Left cardiac atrium (tissue), 4 donors: ENCODE measurements at regions of chr3 and their contacts with region 1.

Region 1: DNA sequence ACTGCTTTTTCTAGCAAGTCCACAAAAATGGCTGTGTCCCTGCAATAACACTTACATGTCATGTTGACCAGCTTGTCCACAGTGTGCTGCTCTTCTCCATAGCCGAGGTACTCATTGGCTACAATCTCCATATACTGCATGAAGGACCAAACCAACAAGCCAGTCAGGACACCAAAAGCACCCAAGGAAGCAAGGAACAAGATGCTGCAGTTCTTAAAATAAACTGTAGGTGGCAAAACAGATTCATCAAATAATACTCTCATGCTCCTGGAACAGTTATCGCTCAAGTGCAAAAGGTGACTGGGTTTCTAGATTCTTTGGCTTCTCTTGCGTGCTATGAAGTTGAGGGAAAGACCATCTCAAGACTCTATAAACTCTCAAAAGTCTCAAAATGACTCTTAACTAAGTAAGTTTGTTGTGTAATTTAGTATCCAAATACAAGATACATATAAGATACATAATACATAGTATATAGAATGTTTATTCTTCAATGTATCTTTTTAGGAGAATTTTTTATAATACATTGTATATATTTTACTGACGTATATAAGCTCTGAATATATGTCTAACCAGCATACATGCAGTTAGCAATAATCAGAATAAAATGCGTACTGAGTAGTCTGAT is 57.0 kb downstream of the NEK10 start:
- DNase-seq: no peak
- ATAC-seq: peak; percentile 64 to 78

Region 2: DNA sequence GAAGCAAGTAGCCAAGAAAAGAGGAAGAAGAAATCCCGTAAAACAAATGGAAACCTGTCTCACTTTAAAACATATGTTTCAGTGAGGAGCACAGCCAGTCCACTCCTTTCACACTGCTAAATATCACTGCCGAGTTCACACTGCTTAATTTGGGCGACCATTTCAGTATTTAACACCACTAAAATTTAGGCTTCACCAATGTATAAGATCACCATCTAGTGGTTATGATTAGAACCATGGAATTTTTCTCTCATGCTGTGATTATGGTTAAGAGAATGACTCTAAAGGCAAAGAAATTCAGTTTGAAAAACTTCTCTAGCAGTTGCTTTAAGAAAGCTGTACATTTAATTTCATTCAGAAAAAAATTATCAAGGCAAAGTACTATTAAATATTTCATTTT is 155.4 kb after region 1 on chr3:
- intact Hi-C with region 1: loop called in 1 of 2 experiments (anchors 2 kb)
- DNase-seq: no peak
- ATAC-seq: peak; percentile 68 to 88

Region 3: DNA sequence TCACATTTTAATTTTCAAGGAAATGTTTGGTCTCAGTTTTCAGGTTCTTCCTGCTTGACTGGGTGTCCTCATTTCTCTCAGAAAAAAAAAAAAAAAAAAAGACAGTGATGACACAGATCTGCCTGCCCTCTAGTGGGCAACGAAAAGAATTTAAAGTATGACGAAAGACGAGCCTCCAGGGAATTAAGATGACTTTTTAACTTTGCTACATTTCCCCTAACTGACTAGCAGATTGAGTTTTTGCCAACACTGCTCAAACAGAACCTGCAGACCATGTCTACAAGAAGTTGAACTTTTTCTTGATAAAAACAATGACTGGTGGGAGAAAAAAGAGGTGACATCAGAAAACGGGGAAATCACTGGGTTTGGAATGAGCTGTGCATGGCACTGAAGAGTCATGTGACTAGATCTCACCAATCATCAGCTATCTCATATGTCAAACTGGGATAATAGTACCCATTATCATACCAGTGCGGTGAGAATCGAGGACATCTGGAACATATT is 369.1 kb after region 1 on chr3:
- intact Hi-C with region 1: loop called in 1 of 2 experiments (anchors 1 kb)
- DNase-seq: no peak
- ATAC-seq: peak; percentile 55 to 58